ENCODE measurements at regions of chr10 and their contacts with region 1.

Region 1: GRCh38 chr10:11986593-11987216 is 55.9 kb downstream of the UPF2 start:
- DNase-seq: peak; percentile 65
- H3K4me3 ChIP-seq: no peak overlapping the region
- H3K27ac ChIP-seq: no peak overlapping the region
- H3K4me1 ChIP-seq: peaks cover 11% of the 10 kb centered on the region
- H3K27me3 ChIP-seq: no peaks in the 10 kb centered on the region
- CTCF ChIP-seq: peak; percentile 86

Region 2: GRCh38 chr10:11793762-11794479 is 192.8 kb before region 1 on chr10:
- intact Hi-C with region 1: loop called (anchors 5 kb)
- DNase-seq: no peak
- H3K4me3 ChIP-seq: no peak overlapping the region
- H3K27ac ChIP-seq: no peak overlapping the region
- H3K4me1 ChIP-seq: peaks cover 2% of the 10 kb centered on the region
- H3K27me3 ChIP-seq: peaks cover 21% of the 10 kb centered on the region
- CTCF ChIP-seq: no peak

Region 3: GRCh38 chr10:12056748-12057147 is 70.0 kb after region 1 on chr10:
- intact Hi-C with region 1: no loop called
- DNase-seq: no peak
- H3K4me3 ChIP-seq: no peak overlapping the region
- H3K27ac ChIP-seq: no peak overlapping the region
- H3K4me1 ChIP-seq: peaks cover 6% of the 10 kb centered on the region
- H3K27me3 ChIP-seq: no peaks in the 10 kb centered on the region
- CTCF ChIP-seq: no peak

Region 4: GRCh38 chr10:12690525-12691126 is 703.9 kb after region 1 on chr10:
- intact Hi-C with region 1: no loop called
- DNase-seq: no peak
- H3K4me3 ChIP-seq: no peak overlapping the region
- H3K27ac ChIP-seq: no peak overlapping the region
- H3K4me1 ChIP-seq: no peaks in the 10 kb centered on the region
- H3K27me3 ChIP-seq: no peaks in the 10 kb centered on the region
- CTCF ChIP-seq: no peak

Measured in left ventricle myocardium inferior (tissue), 1 donor.